Activated CD8-positive, alpha-beta T cell treated with anti-CD3 and anti-CD28 coated beads, Interleukin-2, amount 10 ng/mL, durations not matched to agents 7 days and 5 days (primary cell): ENCODE measurements at regions of chr12 and their contacts with region 1.

Region 1: DNA sequence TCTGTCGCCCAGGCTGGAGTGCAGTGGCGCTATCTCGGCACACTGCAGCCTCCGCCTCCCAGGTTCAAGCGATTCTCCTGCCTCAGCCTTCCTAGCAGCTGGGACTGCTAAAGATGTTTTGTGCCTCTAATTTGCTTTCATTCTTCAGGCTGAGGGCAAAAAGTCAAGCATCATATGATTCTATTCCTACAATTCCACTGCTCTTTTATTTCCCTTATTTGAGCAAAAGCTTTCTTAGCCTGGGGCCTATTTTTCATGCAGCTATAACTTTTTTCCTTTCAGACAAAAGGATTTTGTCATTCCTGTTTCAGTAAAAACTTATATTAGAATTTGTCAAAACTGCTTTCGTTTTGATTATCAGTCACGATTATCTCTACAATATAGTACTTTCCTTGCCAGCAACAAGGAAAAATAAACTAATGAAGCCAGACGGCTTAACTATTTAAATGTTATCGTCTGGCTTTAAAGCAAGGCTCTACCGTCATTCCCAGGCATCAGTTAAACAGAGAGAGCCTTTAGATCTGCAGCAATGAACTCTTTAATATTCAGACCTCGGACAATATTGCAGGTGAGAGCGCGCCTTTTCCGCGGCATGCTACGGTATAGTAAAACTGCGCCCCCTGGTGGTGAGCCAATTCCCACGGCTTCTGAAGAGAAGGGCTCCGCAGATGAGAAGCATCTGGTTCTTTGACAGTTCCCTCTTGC is 1.4 kb upstream of the SLC2A13 start:
- DNase-seq: peak; percentile 93
- ATAC-seq: peak; percentile 34
- H3K4me3 Mint-ChIP-seq: peak overlapping the region; percentile 78
- H3K27ac Mint-ChIP-seq: no peak overlapping the region
- H3K4me1 Mint-ChIP-seq: peaks cover 32% of the 10 kb centered on the region
- H3K27me3 Mint-ChIP-seq: peaks cover 11% of the 10 kb centered on the region

Region 2: GRCh38 chr12:40117818-40118217 is 10.6 kb after region 1 on chr12:
- CTCF ChIA-PET with region 1: interaction called, 27 read pairs
- POLR2A ChIA-PET with region 1: no interaction called
- DNase-seq: no peak
- ATAC-seq: no peak
- H3K4me3 Mint-ChIP-seq: no peak overlapping the region
- H3K27ac Mint-ChIP-seq: no peak overlapping the region
- H3K4me1 Mint-ChIP-seq: peaks cover 6% of the 10 kb centered on the region
- H3K27me3 Mint-ChIP-seq: peaks cover 16% of the 10 kb centered on the region